ENCODE measurements at regions of chr5 and their contacts with region 1.

Region 1: GRCh38 chr5:112848116-112848811 is 12.8 kb upstream of the SRP19 start:
- DNase-seq: no peak
- ATAC-seq: peak; percentile 95
- H3K4me3 Mint-ChIP-seq: peak overlapping the region; percentile 56
- H3K27ac Mint-ChIP-seq: peak overlapping the region; percentile 85
- H3K4me1 Mint-ChIP-seq: peaks cover 20% of the 10 kb centered on the region
- H3K27me3 Mint-ChIP-seq: no peaks in the 10 kb centered on the region
- CTCF ChIP-seq: peak; percentile 54

Region 2: GRCh38 chr5:112551419-112552032 is 296.7 kb before region 1 on chr5:
- CTCF ChIA-PET with region 1: interaction called, 21 read pairs
- POLR2A ChIA-PET with region 1: no interaction called
- DNase-seq: no peak
- ATAC-seq: peak; percentile 65
- H3K4me3 Mint-ChIP-seq: no peak overlapping the region
- H3K27ac Mint-ChIP-seq: no peak overlapping the region
- H3K4me1 Mint-ChIP-seq: 0 out of 2 replicates have a peak, but pooled peaks cover 3% of the 10 kb centered on the region
- H3K27me3 Mint-ChIP-seq: no peaks in the 10 kb centered on the region
- CTCF ChIP-seq: peak; percentile 52

Region 3: DNA sequence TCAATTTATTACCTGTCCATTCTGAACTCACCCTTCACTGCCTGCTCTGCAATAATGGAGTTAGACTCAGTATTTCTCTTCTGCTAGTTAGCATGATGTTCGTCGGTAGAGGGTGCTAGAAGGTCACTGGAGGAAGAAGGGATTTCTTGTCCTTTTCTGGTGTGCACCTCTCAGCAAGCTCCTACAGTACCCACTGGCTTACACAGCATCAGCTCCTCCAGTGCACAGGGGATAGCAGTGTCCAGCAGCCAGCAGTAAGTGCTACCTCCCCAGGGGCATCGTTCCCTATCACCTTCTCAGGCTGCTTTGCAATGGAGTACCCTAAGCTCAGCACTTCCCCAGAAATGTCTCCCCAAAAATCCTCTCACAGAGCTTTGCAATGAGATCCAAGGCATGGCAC is 156.5 kb before region 1 on chr5:
- CTCF ChIA-PET with region 1: interaction called, 51 read pairs
- POLR2A ChIA-PET with region 1: no interaction called
- DNase-seq: peak; percentile 49
- ATAC-seq: peak; percentile 87
- H3K4me3 Mint-ChIP-seq: no peak overlapping the region
- H3K27ac Mint-ChIP-seq: no peak overlapping the region
- H3K4me1 Mint-ChIP-seq: peaks cover 19% of the 10 kb centered on the region
- H3K27me3 Mint-ChIP-seq: no peaks in the 10 kb centered on the region
- CTCF ChIP-seq: no peak; the same call in 1 of the 2 replicates

Region 4: DNA sequence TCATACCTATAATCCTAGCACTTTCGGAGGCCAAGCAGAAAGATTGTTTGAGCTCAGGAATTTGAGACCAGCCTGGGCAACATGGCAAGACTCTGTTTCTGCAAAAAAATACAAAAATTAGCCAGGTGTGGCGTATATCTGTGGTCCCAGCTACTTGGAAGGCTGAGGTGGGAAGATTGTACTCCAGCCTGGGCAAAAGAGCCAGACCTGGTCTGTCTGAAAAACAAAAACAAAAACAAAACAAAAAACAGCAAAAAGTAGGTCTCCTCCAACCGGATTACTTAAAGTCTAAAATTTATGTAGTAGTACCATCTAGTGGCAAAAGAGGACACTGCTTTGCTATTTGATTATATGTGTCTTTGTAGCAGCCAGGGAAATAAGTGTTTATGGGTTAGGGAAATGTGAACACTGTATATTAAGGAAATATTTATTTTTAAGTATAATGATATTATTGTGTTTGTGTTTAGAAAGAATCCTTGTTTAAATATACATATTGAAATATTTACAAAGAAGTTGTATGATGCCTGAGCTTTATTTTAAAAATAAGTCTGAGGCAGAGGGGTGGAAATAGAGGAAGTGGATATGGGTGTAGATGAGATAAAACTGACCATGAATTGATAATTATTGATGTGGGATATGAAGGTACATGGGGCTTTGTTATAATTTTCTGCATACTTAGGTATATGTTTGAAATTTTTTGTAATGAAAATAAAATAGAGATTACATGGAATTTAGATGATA is 90.6 kb before region 1 on chr5:
- CTCF ChIA-PET with region 1: interaction called, 10 read pairs
- POLR2A ChIA-PET with region 1: no interaction called
- DNase-seq: no peak
- ATAC-seq: peak; percentile 73
- H3K4me3 Mint-ChIP-seq: no peak overlapping the region
- H3K27ac Mint-ChIP-seq: 0 out of 2 replicates have a peak overlapping the region, but pooled peaks have one; percentile 64
- H3K4me1 Mint-ChIP-seq: no peaks in the 10 kb centered on the region
- H3K27me3 Mint-ChIP-seq: no peaks in the 10 kb centered on the region
- CTCF ChIP-seq: peak; percentile 43

Region 5: GRCh38 chr5:112833971-112834370 is 14.3 kb before region 1 on chr5:
- CTCF ChIA-PET with region 1: interaction called, 19 read pairs
- POLR2A ChIA-PET with region 1: no interaction called
- DNase-seq: no peak
- ATAC-seq: no peak
- H3K4me3 Mint-ChIP-seq: no peak overlapping the region
- H3K27ac Mint-ChIP-seq: no peak overlapping the region
- H3K4me1 Mint-ChIP-seq: no peaks in the 10 kb centered on the region
- H3K27me3 Mint-ChIP-seq: no peaks in the 10 kb centered on the region
- CTCF ChIP-seq: no peak

Region 6: GRCh38 chr5:112921833-112922817 is 73.9 kb after region 1 on chr5 and contains the start of gene REEP5:
- CTCF ChIA-PET with region 1: interaction called, 15 read pairs
- POLR2A ChIA-PET with region 1: no interaction called
- DNase-seq: peak; percentile 82
- ATAC-seq: peak; percentile 90
- H3K4me3 Mint-ChIP-seq: peak within 1 kb of the TSS; percentile 93
- H3K27ac Mint-ChIP-seq: peak within 1 kb of the TSS; percentile 95
- H3K4me1 Mint-ChIP-seq: peaks cover 20% of the 10 kb centered on the region
- H3K27me3 Mint-ChIP-seq: peaks cover 12% of the 10 kb centered on the region
- CTCF ChIP-seq: peak; percentile 76
- total RNA-seq, gene REEP5: 49.6 to 54.3 TPM (median 53.0 TPM) in 3 replicates

Measured in WTC11 (cell line).